ENCODE measurements at regions of chr18 and their contacts with region 1.

Region 1: GRCh38 chr18:12744103-12744502 is 41.3 kb downstream of the PSMG2 start:
- DNase-seq: no peak
- H3K4me3 ChIP-seq: no peak overlapping the region
- CTCF ChIP-seq: peak; percentile 46

Region 2: GRCh38 chr18:12543697-12544096 is 200.4 kb before region 1 on chr18:
- CTCF ChIA-PET with region 1: no interaction called
- POLR2A ChIA-PET with region 1: no interaction called
- DNase-seq: no peak
- H3K4me3 ChIP-seq: no peak overlapping the region
- CTCF ChIP-seq: no peak

Region 3: DNA sequence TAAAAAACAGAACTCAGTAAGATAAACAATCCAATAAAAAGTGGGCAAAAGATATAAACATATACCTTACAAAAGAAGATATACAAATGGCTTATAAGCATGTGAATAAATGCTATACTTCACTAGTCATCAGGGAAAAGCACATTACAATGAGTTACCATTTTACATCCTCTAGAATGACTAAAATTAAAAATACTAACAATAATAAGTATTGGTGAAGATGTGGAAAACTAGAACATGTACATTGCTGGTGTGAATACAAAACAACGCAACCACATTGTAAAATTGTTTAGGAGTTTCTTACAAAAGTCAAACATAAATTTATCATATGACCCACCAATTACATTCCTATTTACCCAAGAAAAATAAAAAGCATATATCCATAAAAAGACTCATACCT is 166.3 kb before region 1 on chr18:
- CTCF ChIA-PET with region 1: no interaction called
- POLR2A ChIA-PET with region 1: no interaction called
- DNase-seq: no peak
- H3K4me3 ChIP-seq: no peak overlapping the region
- CTCF ChIP-seq: no peak

Region 4: GRCh38 chr18:12702221-12703095 is 41.6 kb before region 1 on chr18 and contains the starts of genes CEP76 and PSMG2:
- CTCF ChIA-PET with region 1: no interaction called
- POLR2A ChIA-PET with region 1: no interaction called
- DNase-seq: no peak
- H3K4me3 ChIP-seq: peak within 1 kb of the TSS; percentile 84
- CTCF ChIP-seq: no peak

Region 5: DNA sequence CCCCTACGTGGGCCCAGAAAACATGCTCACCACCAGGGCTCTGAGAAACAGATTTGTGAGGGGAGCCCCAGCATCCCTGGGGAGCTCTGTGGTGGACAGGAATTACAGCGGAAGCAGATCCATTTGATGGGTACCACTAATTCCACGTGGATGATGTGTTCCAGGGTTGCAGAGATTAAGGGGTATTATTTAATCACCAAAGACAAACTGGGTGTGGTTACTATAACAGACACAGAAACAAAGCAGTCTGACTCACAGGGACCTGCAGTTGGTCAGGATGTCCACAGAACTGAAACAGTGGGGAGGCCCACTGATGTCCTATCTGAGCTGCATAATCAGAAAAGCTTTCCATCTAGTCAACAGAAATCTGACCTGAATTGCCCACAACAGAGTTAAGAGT is 24.5 kb after region 1 on chr18:
- CTCF ChIA-PET with region 1: interaction called, 22 read pairs
- POLR2A ChIA-PET with region 1: no interaction called
- DNase-seq: no peak
- H3K4me3 ChIP-seq: no peak overlapping the region
- CTCF ChIP-seq: no peak

Region 6: DNA sequence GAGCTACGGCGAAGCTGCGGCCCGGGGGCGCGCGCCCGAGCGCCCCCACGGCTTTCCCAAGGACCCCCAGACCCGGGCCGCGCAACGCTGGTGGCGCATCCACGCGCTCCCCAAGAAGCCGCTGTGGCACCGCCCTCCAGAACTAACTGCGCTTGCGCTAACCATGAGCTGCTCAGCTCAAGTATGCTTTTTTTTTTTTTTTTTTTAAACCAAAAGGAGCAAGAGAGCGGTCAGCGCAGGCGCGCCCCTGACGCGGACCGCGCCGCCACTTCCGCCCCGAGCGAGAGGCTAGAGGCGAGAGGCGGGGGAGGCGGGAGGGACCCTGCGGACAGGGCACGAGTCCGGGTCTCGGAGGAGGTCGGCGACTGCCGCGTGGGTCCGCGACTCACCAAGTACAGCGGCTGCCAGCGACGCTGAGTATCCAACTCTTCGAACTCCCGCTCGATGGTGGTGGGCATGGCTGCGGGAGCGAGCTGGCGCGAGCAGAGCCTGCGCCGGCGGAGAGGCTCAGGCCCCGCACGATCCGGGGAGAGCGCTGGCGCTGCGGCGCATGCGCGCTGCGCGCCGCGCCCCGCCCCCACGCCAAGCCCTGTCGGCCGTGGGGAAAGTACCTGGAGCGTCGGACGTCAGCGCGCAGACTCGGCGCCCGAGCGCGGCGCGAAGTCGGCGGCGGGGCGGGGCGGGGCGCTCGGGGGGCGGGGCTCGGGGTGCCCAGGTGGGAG is 139.7 kb after region 1 on chr18 and contains the start of gene PTPN2:
- CTCF ChIA-PET with region 1: interaction called, 324 read pairs
- POLR2A ChIA-PET with region 1: interaction called, 3 read pairs
- DNase-seq: peak; percentile 67
- H3K4me3 ChIP-seq: peak within 1 kb of the TSS; percentile 93
- CTCF ChIP-seq: no peak

Region 7: GRCh38 chr18:12904012-12904516 is 160.0 kb after region 1 on chr18:
- CTCF ChIA-PET with region 1: interaction called, 16 read pairs
- POLR2A ChIA-PET with region 1: no interaction called
- DNase-seq: no peak
- H3K4me3 ChIP-seq: no peak overlapping the region
- CTCF ChIP-seq: no peak

Region 8: GRCh38 chr18:12921178-12921577 is 177.1 kb after region 1 on chr18:
- CTCF ChIA-PET with region 1: interaction called, 22 read pairs
- POLR2A ChIA-PET with region 1: no interaction called
- DNase-seq: no peak
- H3K4me3 ChIP-seq: no peak overlapping the region
- CTCF ChIP-seq: no peak

Region 9: GRCh38 chr18:12944709-12945108 is 200.6 kb after region 1 on chr18:
- CTCF ChIA-PET with region 1: interaction called, 193 read pairs
- POLR2A ChIA-PET with region 1: interaction called, 6 read pairs
- DNase-seq: no peak
- H3K4me3 ChIP-seq: no peak overlapping the region
- CTCF ChIP-seq: no peak